ENCODE measurements at regions of chr15 and their contacts with region 1.

Region 1: DNA sequence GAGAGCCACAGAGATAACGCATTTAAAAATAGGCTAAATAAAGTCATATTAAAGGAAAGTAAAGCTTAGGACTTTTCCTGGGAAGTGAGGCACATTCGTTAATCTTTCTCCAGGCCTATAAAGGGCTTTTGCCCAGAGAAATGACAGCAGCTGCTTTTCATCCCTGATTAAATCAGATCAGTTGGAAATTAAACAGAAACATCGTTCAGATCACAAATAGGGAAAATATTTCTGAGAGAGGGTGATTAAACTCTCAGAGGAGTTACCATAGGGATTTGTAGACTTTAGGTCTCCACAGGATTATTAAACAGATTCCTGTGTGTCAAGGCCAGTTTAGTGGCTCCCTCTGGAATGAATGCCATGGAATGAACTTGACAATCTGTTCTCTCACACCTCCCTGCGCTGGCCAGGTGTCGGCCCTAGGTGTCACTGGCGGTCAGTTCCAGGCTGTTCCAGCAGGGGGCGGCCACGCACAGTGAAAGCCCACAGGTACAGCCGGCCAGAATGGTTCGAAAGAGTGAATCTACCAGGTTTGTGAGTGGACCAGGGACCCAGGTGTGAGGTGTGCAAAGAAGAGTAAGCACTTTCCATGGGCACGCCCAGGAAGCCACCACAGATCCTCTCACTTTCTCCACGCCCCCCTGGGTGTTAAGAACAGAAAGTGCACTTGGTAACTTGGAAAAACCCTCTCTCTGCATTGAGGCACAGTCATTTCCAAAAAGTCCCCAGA is 253.0 kb upstream of the RASGRP1 start:
- DNase-seq: peak; percentile 91
- ATAC-seq: peak; percentile 100
- H3K4me3 ChIP-seq: no peak overlapping the region; the same call in 1 of the 2 replicates
- H3K27ac ChIP-seq: no peak overlapping the region
- H3K4me1 ChIP-seq: peaks cover 4% of the 10 kb centered on the region; the same call in 1 of the 2 replicates
- H3K27me3 ChIP-seq: no peaks in the 10 kb centered on the region
- CTCF ChIP-seq: peak; percentile 100

Region 2: GRCh38 chr15:38707802-38708671 is 109.6 kb before region 1 on chr15:
- CTCF ChIA-PET with region 1: no interaction called
- POLR2A ChIA-PET with region 1: no interaction called
- intact Hi-C with region 1: loop called (anchors 2 kb)
- DNase-seq: peak; percentile 77
- ATAC-seq: peak; percentile 97
- H3K4me3 ChIP-seq: no peak overlapping the region
- H3K27ac ChIP-seq: no peak overlapping the region
- H3K4me1 ChIP-seq: no peaks in the 10 kb centered on the region
- H3K27me3 ChIP-seq: no peaks in the 10 kb centered on the region
- CTCF ChIP-seq: peak; percentile 84

Region 3: GRCh38 chr15:38991126-38991525 is 173.5 kb after region 1 on chr15:
- CTCF ChIA-PET with region 1: interaction called, 3 read pairs
- POLR2A ChIA-PET with region 1: no interaction called
- intact Hi-C with region 1: loop called (anchors 1 kb)
- DNase-seq: peak; percentile 58
- ATAC-seq: no peak
- H3K4me3 ChIP-seq: no peak overlapping the region
- H3K27ac ChIP-seq: no peak overlapping the region
- H3K4me1 ChIP-seq: peaks cover 9% of the 10 kb centered on the region
- H3K27me3 ChIP-seq: no peaks in the 10 kb centered on the region
- CTCF ChIP-seq: peak; percentile 72

Region 4: DNA sequence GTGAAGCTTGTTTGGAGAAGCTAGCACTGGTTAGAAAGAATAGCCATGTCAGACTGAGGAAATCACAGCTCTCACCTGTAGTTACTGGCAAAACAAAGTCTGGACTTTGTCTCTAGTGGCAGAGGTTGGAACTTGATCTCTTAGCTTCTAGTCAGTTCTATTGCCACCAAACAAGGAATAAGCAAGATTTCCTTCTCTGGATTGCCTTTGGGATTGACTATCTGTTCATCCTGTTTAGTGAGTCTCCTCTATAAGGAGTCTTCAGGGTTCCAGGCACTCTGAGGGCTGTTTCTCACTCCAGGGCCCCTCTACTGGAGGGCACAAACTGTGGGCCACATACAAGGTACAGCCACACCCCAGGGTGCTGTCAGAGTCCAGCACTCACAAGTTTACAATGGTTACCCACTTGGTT is 336.6 kb after region 1 on chr15:
- CTCF ChIA-PET with region 1: no interaction called
- POLR2A ChIA-PET with region 1: no interaction called
- intact Hi-C with region 1: loop called (anchors 1 kb)
- DNase-seq: peak; percentile 45
- ATAC-seq: peak; percentile 39
- H3K4me3 ChIP-seq: peak overlapping the region; percentile 38; the same call in 1 of the 2 replicates
- H3K27ac ChIP-seq: peak overlapping the region; percentile 54
- H3K4me1 ChIP-seq: peaks cover 29% of the 10 kb centered on the region
- H3K27me3 ChIP-seq: no peaks in the 10 kb centered on the region
- CTCF ChIP-seq: peak; percentile 43; the same call in 1 of the 2 replicates

Region 5: GRCh38 chr15:39273717-39274411 is 456.3 kb after region 1 on chr15:
- CTCF ChIA-PET with region 1: no interaction called
- POLR2A ChIA-PET with region 1: no interaction called
- intact Hi-C with region 1: loop called (anchors 1 kb)
- DNase-seq: peak; percentile 100
- ATAC-seq: peak; percentile 83
- H3K4me3 ChIP-seq: peak overlapping the region; percentile 57
- H3K27ac ChIP-seq: peak overlapping the region; percentile 97
- H3K4me1 ChIP-seq: peaks cover 54% of the 10 kb centered on the region
- H3K27me3 ChIP-seq: no peaks in the 10 kb centered on the region
- CTCF ChIP-seq: no peak

Region 6: GRCh38 chr15:39756806-39757522 is 939.4 kb after region 1 on chr15:
- CTCF ChIA-PET with region 1: no interaction called
- POLR2A ChIA-PET with region 1: no interaction called
- intact Hi-C with region 1: loop called (anchors 5 kb)
- DNase-seq: peak; percentile 79
- ATAC-seq: peak; percentile 46; the same call in 1 of the 2 replicates
- H3K4me3 ChIP-seq: no peak overlapping the region
- H3K27ac ChIP-seq: no peak overlapping the region
- H3K4me1 ChIP-seq: no peaks in the 10 kb centered on the region
- H3K27me3 ChIP-seq: no peaks in the 10 kb centered on the region
- CTCF ChIP-seq: peak; percentile 78